PC-3 (cell line): ENCODE measurements at regions of chr3 and their contacts with region 1.

Region 1: GRCh38 chr3:119819806-119820205 is 37.9 kb downstream of the NR1I2 start:
- DNase-seq: peak; percentile 25
- ATAC-seq: peak; percentile 19; the same call in 1 of the 2 replicates
- H3K4me3 ChIP-seq: no peak overlapping the region
- H3K27ac ChIP-seq: no peak overlapping the region
- H3K4me1 ChIP-seq: no peaks in the 10 kb centered on the region
- H3K27me3 ChIP-seq: no peaks in the 10 kb centered on the region
- CTCF ChIP-seq: no peak

Region 2: DNA sequence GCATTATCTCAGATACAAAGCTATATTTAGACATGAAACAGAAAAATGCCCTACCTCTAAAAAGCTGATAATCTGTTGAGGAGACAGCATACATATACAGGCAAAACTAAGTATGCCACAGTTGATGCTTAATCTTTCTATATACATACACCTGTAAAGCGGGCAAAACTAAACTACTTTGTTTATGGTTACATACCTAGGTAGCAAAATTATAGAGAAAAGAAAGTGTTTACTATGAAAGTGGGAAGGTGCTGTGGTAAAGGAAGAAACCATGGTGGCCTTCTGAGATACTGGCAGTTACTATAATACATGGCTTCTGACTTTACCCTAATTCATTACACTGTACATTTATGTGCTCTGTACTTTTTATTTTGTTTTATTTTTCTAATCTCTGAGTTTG is 73.9 kb before region 1 on chr3:
- CTCF ChIA-PET with region 1: no interaction called
- POLR2A ChIA-PET with region 1: no interaction called
- intact Hi-C with region 1: no loop called
- DNase-seq: no peak
- ATAC-seq: no peak
- H3K4me3 ChIP-seq: no peak overlapping the region
- H3K27ac ChIP-seq: no peak overlapping the region
- H3K4me1 ChIP-seq: no peaks in the 10 kb centered on the region
- H3K27me3 ChIP-seq: peaks cover 43% of the 10 kb centered on the region
- CTCF ChIP-seq: no peak

Region 3: DNA sequence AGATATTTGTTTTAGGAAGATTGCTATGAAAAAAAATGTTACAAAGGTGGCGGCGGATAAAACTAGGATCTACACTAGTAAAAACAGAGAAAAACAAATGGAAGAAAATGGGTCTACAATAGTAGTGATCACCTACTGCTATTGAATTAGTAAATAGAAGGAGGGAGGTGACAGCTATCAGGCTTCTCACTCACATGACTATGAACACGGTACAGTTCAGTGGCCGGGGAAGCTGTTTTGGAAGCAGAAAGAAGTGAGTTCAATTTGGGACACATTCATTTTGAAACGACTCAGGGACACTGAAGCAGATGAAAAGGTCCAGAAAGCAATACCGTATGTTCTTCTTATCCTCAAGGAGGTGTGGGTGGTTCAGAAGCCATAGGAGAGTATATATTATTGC is 136.2 kb after region 1 on chr3:
- CTCF ChIA-PET with region 1: interaction called, 11 read pairs
- POLR2A ChIA-PET with region 1: no interaction called
- intact Hi-C with region 1: no loop called
- DNase-seq: no peak
- ATAC-seq: no peak
- H3K4me3 ChIP-seq: no peak overlapping the region
- H3K27ac ChIP-seq: no peak overlapping the region
- H3K4me1 ChIP-seq: no peaks in the 10 kb centered on the region
- H3K27me3 ChIP-seq: no peaks in the 10 kb centered on the region
- CTCF ChIP-seq: no peak

Region 4: GRCh38 chr3:120129051-120129450 is 309.2 kb after region 1 on chr3:
- CTCF ChIA-PET with region 1: no interaction called
- POLR2A ChIA-PET with region 1: no interaction called
- intact Hi-C with region 1: no loop called
- DNase-seq: no peak
- ATAC-seq: no peak
- H3K4me3 ChIP-seq: no peak overlapping the region
- H3K27ac ChIP-seq: no peak overlapping the region
- H3K4me1 ChIP-seq: peaks cover 9% of the 10 kb centered on the region
- H3K27me3 ChIP-seq: no peaks in the 10 kb centered on the region
- CTCF ChIP-seq: no peak

Region 5: GRCh38 chr3:120153091-120153692 is 333.4 kb after region 1 on chr3:
- CTCF ChIA-PET with region 1: no interaction called
- POLR2A ChIA-PET with region 1: no interaction called
- intact Hi-C with region 1: no loop called
- DNase-seq: peak; percentile 93
- ATAC-seq: peak; percentile 88
- H3K4me3 ChIP-seq: peak overlapping the region; percentile 18; the same call in 1 of the 2 replicates
- H3K27ac ChIP-seq: peak overlapping the region; percentile 89
- H3K4me1 ChIP-seq: peaks cover 30% of the 10 kb centered on the region
- H3K27me3 ChIP-seq: no peaks in the 10 kb centered on the region
- CTCF ChIP-seq: no peak

Region 6: DNA sequence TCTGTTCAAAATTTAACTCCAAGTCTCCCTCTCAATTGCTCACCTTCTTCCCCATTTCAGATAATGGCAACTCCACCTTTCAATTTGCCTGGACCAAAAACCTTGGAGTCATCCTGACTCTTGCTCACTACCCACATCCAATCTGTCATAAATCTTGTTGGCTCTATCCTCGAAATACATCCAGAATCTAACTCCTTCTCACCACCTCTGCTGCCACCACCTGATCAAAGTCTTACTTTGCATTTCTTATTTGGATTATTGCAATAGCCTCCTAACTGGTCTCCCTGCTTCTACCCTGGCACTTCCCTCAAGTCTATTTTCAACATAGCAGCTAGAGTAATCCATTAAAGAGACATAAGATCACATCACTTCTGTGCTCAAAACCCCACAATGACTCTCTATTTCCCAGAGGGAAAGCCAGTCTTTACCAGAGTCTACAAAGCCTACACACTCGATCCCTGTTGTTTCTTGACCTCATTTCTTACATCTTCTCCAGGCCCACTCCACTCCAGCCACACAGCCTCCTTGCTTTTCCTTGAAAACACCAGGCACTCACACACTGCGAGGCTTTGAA is 378.6 kb after region 1 on chr3:
- CTCF ChIA-PET with region 1: interaction called, 7 read pairs
- POLR2A ChIA-PET with region 1: no interaction called
- intact Hi-C with region 1: loop called (anchors 5 kb)
- DNase-seq: peak; percentile 81
- ATAC-seq: peak; percentile 81
- H3K4me3 ChIP-seq: no peak overlapping the region
- H3K27ac ChIP-seq: no peak overlapping the region
- H3K4me1 ChIP-seq: peaks cover 25% of the 10 kb centered on the region
- H3K27me3 ChIP-seq: no peaks in the 10 kb centered on the region
- CTCF ChIP-seq: peak; percentile 90